ENCODE measurements at regions of chr18 and their contacts with region 1.

Region 1: GRCh38 chr18:45212181-45213039 is 402.9 kb upstream of the SLC14A2 start:
- DNase-seq: no peak
- H3K4me3 ChIP-seq: no peak overlapping the region
- CTCF ChIP-seq: peak; percentile 99

Region 2: GRCh38 chr18:44901283-44901682 is 311.1 kb before region 1 on chr18:
- CTCF ChIA-PET with region 1: interaction called, 18 read pairs
- POLR2A ChIA-PET with region 1: no interaction called
- DNase-seq: no peak
- H3K4me3 ChIP-seq: no peak overlapping the region
- CTCF ChIP-seq: peak; percentile 8

Region 3: GRCh38 chr18:45197526-45197970 is 14.9 kb before region 1 on chr18:
- CTCF ChIA-PET with region 1: interaction called, 31 read pairs
- POLR2A ChIA-PET with region 1: no interaction called
- DNase-seq: peak; percentile 45
- H3K4me3 ChIP-seq: no peak overlapping the region
- CTCF ChIP-seq: no peak

Region 4: GRCh38 chr18:45227001-45227742 is 14.8 kb after region 1 on chr18:
- CTCF ChIA-PET with region 1: interaction called, 24 read pairs
- POLR2A ChIA-PET with region 1: no interaction called
- DNase-seq: no peak
- H3K4me3 ChIP-seq: no peak overlapping the region
- CTCF ChIP-seq: no peak